Panc1 (cell line): ENCODE measurements at regions of chr5 and their contacts with region 1.

Region 1: DNA sequence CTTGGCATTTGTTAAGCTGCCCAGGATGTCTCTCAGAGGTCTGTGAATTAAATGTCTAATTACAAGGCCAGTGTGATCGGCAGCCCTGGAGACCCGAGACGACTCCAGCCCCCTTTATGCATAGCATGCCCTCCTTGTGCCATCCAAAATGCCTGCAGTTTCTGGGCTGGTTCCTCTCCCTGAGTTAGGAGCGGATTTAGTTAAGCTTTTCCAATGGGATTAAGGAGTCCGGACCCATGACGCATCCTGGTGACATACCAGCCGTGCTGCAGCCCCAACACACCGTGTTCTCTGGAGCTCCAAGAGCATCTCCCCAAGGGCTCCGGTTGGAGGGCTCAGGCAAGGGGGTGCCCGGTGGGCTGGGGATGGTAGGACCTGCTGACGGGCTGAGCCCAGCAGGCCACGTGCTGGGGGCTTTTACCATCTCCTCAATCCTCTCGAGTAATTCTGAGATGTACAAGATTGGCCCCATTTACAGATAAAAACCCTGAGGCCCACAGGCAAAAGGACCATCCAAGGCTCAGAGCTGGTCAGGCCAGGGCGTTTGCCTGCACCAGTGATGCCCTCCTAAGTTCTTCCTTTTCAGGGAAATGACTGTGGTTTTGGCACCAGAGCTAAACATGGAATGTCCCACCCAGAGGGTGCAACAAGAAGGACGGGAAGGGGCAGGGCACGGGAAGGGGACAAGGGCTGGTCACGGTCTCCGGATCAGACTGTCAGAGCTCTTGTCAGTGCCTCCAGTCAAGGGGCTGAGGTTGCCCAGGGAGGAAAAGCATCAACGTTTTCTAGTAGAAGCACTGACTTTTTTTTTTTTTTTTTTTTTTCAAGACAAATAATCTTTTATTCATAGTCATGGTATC is 82.6 kb upstream of the PHYKPL start:
- DNase-seq: no peak
- ATAC-seq: no peak
- H3K4me3 ChIP-seq: no peak overlapping the region
- H3K27ac ChIP-seq: no peak overlapping the region
- H3K4me1 ChIP-seq: no peaks in the 10 kb centered on the region
- H3K27me3 ChIP-seq: peaks cover 10% of the 10 kb centered on the region
- CTCF ChIP-seq: no peak

Region 2: DNA sequence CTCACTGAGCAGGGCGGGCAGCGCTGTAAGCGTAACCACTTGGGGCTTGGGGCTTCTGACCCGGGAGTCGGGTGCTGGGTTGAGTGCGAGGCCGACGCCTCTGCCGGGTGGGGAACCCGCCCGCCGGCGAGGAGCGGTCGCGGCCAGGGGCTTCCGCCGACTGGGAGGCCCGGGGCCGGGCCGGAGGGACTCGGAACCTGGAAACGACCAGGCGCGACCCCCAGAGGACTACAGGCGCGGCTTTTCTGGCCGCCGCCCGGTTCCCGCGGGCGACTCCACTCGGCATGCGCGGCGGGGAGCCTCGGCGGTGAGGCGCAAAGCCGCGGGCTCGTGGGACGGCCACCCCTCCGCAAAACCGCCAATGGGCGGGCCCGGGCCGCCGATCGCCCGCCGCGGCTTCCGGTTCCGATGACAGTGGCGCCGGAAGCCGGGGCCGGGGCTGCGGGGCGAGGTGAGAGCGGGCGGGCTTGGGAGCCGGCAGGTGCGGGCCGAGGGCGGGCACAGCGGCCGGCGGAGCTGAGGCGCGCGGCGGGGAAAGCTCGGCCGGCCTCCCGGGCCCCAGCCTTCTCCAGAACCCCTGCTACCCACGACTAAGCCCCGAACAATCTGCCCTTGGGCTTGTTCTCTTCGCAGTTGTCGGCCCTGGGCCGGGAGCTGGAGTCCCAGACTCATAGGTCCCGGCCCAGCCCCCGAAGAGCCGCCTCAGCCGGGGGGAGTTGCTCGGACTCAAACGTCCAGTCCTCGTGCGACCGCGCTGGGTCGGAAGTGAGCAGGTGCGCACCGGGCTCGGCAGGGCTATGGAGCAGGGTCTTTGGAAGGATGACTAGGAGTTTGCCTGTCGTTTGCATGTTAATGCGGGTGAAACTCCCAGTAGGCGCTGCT is 184.3 kb before region 1 on chr5 and contains the start of gene RMND5B:
- CTCF ChIA-PET with region 1: no interaction called
- POLR2A ChIA-PET with region 1: no interaction called
- in situ Hi-C with region 1: no loop called
- intact Hi-C with region 1: no loop called
- DNase-seq: no peak
- ATAC-seq: peak; percentile 96
- H3K4me3 ChIP-seq: peak within 1 kb of the TSS; percentile 66 to 84
- H3K27ac ChIP-seq: peak within 1 kb of the TSS; percentile 91
- H3K4me1 ChIP-seq: no peaks in the 10 kb centered on the region; the same call in none of the 2 replicates
- H3K27me3 ChIP-seq: no peaks in the 10 kb centered on the region
- CTCF ChIP-seq: no peak
- total RNA-seq, gene RMND5B: 40.8 TPM

Region 3: DNA sequence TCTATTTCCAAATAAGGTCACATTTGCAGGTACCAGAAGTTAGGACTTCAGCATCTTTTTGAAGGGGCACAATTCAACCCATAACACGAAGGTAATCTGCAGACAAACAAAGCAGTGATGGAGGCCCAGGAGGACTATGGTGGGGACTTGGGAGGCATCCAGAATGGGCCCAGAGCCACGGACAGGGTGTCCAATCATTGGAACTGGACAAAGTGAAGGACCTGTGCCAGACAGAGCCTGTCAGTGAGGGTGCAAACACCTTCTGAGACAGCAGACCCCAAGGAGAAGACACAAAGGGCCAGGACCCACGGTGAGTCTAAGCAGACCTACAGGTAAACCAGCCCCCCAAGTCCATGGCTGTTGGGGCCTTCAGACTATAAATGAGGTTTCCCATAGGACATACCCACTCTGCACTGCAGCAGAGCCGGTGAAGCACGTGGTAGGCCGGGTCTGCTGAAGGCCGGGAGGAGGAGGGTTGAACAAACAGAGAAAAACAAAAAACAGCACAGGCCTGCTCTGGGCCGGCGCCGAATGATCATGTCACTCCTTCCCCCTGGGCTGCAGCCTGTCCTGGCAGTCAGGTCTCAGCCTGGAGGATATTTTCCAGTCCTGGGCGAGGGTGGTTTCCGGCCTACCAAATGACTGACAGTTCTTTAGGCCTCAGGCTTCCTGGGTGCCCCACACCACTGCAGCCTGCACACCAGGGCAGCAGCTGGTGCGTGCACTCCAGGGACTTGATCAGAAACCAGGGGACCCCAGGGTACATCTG is 190.6 kb after region 1 on chr5:
- CTCF ChIA-PET with region 1: no interaction called
- POLR2A ChIA-PET with region 1: interaction called, 14 read pairs
- in situ Hi-C with region 1: no loop called
- intact Hi-C with region 1: no loop called
- DNase-seq: no peak
- ATAC-seq: no peak
- H3K4me3 ChIP-seq: no peak overlapping the region
- H3K27ac ChIP-seq: no peak overlapping the region
- H3K4me1 ChIP-seq: no peaks in the 10 kb centered on the region
- H3K27me3 ChIP-seq: no peaks in the 10 kb centered on the region
- CTCF ChIP-seq: no peak